MCF 10A (cell line): ENCODE measurements at regions of chrX and their contacts with region 1.

Region 1: GRCh38 chrX:138858438-138858837 is 146.9 kb upstream of the FGF13 start:
- DNase-seq: peak; percentile 89
- H3K4me3 Mint-ChIP-seq: no peak overlapping the region
- H3K27ac Mint-ChIP-seq: peak overlapping the region; percentile 19
- H3K4me1 Mint-ChIP-seq: peaks cover 4% of the 10 kb centered on the region
- H3K27me3 Mint-ChIP-seq: no peaks in the 10 kb centered on the region
- CTCF ChIP-seq: no peak

Region 2: GRCh38 chrX:138886769-138887168 is 28.3 kb after region 1 on chrX:
- CTCF ChIA-PET with region 1: no interaction called
- POLR2A ChIA-PET with region 1: interaction called, 10 read pairs
- intact Hi-C with region 1: no loop called
- DNase-seq: peak; percentile 88
- H3K4me3 Mint-ChIP-seq: no peak overlapping the region
- H3K27ac Mint-ChIP-seq: peak overlapping the region; percentile 84
- H3K4me1 Mint-ChIP-seq: peaks cover 14% of the 10 kb centered on the region
- H3K27me3 Mint-ChIP-seq: no peaks in the 10 kb centered on the region
- CTCF ChIP-seq: no peak

Region 3: DNA sequence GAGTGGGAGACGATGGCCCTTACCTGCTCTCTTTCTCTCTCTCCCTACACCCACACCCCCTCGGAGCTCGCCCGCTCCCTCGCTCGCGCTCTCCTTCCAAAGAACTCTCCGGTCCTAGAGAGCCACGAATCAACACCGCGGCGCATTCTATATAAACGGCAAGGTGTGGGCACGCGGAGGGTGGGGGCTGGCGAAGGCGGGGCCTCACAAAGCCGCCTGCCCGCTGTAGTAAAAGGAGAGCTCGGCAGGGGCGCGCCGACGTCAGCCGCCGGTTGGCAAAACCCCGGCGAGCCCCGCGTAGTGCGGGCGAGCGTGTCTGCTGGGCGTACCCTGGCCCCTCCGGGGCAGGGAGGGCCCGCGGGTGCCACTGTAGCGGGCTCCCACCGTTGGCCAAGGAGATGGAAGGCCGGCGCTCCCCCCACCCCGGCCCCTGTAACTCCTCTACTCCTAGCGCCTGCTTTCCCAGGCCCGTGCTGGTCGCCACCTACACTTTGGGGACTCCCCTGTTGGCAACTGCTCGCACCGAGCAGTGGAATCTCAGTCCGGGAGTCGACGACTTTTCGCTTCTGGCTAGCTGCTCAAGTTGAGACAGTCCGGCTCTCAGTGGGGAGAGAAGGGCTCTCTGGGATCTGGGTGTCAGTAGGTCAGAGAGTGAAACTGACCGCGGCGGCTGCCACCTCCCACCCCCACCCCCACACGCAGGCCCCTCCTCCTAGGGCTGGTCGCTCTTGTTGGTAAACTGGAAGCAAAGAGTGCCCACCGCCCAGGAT is 346.6 kb after region 1 on chrX:
- CTCF ChIA-PET with region 1: interaction called, 4 read pairs
- POLR2A ChIA-PET with region 1: interaction called, 5 read pairs
- intact Hi-C with region 1: loop called (anchors 10 kb)
- DNase-seq: peak; percentile 57
- H3K4me3 Mint-ChIP-seq: peak overlapping the region; percentile 87
- H3K27ac Mint-ChIP-seq: peak overlapping the region; percentile 76
- H3K4me1 Mint-ChIP-seq: peaks cover 15% of the 10 kb centered on the region
- H3K27me3 Mint-ChIP-seq: no peaks in the 10 kb centered on the region
- CTCF ChIP-seq: peak; percentile 9